Activated B cell treated with CpG ODN at 0.5 μM for 24 hours (primary cell): ENCODE measurements at regions of chr9 and their contacts with region 1.

Region 1: DNA sequence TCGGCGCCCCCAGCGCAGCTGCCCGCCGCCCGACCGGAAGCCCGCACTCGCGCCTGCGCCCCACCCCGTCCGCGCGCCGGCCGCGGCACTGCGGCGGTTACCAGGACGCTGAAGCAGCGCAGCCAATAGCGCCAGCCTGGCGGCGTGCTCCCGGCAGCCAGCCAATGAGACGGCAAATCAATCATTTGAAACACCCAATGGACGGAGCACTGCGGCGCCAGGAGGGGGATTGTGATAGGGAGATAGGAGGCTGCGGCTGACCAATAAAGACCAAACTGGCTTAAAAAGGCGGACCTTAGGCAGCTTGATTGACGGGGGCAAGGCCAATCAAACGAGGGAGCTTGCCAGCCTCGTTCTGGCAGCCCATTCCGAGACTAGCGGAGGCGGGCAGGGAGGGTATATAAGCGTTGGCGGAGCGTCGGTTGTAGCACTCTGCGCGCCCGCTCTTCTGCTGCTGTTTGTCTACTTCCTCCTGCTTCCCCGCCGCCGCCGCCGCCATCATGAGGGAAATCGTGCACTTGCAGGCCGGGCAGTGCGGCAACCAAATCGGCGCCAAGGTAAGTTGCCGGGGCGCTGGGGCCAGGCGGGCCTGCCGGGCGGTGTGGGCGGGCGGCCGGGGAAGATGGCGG is at the start of gene TUBB4B:
- DNase-seq: peak; percentile 95
- ATAC-seq: peak; percentile 75
- H3K4me3 Mint-ChIP-seq: peak within 1 kb of the TSS; percentile 88
- H3K27ac Mint-ChIP-seq: peak within 1 kb of the TSS; percentile 93
- H3K4me1 Mint-ChIP-seq: peaks cover 50% of the 10 kb centered on the region
- H3K27me3 Mint-ChIP-seq: no peaks in the 10 kb centered on the region
- CTCF ChIP-seq: no peak
- total RNA-seq, gene TUBB4B: 182 and 197 TPM in 2 replicates

Region 2: GRCh38 chr9:136564379-136564988 is 676.5 kb before region 1 on chr9:
- CTCF ChIA-PET with region 1: no interaction called
- POLR2A ChIA-PET with region 1: no interaction called
- intact Hi-C with region 1: no loop called
- DNase-seq: no peak
- ATAC-seq: no peak
- H3K4me3 Mint-ChIP-seq: no peak overlapping the region
- H3K27ac Mint-ChIP-seq: no peak overlapping the region
- H3K4me1 Mint-ChIP-seq: no peaks in the 10 kb centered on the region
- H3K27me3 Mint-ChIP-seq: no peaks in the 10 kb centered on the region
- CTCF ChIP-seq: no peak

Region 3: GRCh38 chr9:137086531-137087408 is 154.2 kb before region 1 on chr9 and contains the start of gene MAN1B1:
- CTCF ChIA-PET with region 1: interaction called, 7 read pairs
- POLR2A ChIA-PET with region 1: interaction called, 37 read pairs
- intact Hi-C with region 1: no loop called
- DNase-seq: peak; percentile 98
- ATAC-seq: peak; percentile 77
- H3K4me3 Mint-ChIP-seq: peak within 1 kb of the TSS; percentile 93
- H3K27ac Mint-ChIP-seq: peak within 1 kb of the TSS; percentile 97
- H3K4me1 Mint-ChIP-seq: peaks cover 49% of the 10 kb centered on the region
- H3K27me3 Mint-ChIP-seq: no peaks in the 10 kb centered on the region
- CTCF ChIP-seq: no peak
- total RNA-seq, gene MAN1B1: 33.6 and 37.7 TPM in 2 replicates

Region 4: DNA sequence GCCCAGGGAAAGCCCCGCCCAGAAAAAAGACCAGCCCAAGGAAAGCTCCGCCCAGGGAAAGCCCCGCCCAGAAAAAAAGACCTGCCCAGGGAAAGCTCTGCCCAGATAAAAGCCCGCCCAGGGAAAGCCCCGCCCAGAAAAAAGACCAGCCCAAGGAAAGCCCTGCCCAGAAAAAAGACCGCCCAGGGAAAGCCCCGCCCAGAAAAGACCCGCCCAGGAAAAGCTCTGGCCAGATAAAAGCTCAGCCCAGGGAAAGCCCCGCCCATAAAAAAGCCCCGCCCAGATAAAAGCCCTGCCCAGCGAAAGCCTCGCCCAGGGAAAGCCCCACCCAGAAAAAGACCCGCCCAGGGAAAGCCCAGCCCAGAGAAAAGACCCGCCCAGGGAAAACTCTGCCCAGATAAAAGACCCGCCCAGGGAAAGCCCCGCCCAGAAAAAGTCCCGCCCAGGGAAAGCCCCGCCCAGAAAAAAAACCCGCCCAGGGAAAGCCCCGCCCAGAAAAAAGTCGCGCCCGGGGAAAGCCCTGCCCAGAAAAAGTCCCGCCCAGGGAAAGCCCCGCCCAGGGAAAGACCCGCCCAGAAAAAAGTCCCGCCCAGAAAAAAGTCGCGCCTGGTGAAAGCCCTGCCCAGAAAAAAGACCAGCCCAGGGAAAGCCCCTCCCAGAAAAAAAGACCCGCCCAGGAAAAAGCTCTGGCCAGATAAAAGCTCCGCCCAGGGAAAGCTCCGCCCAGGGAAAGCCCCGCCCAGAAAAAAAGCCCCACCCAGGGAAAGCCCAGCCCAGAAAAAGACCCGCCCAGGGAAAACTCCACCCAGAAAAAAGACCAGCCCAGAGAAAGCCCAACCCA is 90.1 kb before region 1 on chr9:
- CTCF ChIA-PET with region 1: interaction called, 4 read pairs
- POLR2A ChIA-PET with region 1: interaction called, 12 read pairs
- intact Hi-C with region 1: no loop called
- DNase-seq: peak; percentile 67
- ATAC-seq: peak; percentile 67
- H3K4me3 Mint-ChIP-seq: peak overlapping the region; percentile 52
- H3K27ac Mint-ChIP-seq: peak overlapping the region; percentile 92
- H3K4me1 Mint-ChIP-seq: peaks cover 14% of the 10 kb centered on the region
- H3K27me3 Mint-ChIP-seq: peaks cover 9% of the 10 kb centered on the region
- CTCF ChIP-seq: no peak

Region 5: DNA sequence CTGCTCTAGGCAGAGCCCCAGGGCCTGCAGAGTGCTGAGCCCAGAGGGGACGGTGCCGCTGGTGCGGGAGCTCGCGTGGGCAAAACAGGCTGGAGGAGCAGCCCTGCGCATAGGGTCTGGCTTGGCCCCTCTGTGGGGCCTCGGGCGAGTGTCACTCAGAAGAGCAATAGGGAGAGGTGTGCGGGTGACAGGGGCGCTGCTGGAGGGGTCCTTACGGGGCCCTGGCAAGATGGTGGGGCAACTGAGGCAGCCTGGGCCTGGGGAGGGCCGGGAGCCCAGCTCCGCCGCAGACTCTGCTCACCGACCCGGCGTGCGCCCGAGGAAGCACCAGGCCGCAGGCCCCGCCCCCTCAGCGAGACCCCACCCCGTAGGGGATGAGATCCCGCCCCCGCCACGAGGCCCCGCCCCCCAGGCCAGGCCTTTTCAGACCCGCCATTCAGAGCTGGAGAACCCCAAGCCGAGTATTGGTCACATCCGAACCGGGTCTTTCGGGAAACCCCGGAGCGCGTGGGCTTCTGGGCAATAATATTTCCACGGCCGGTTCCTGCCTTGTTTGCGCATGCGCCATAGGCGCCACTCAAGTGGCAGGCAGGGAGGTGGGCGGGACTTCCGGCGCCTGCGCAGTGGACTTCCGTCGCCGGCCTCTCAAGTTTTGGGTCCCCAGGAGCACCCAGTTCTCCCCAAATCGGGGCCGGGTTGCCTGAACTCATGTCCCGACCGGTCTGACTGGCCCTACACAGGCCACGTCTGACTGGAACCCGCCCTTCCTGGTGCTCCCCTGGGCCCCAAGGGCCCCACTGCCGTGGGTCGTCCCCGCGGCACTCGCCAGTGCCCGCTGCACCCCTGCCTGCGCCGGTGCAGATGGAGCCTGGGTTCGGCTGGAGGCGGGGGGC is 17.7 kb before region 1 on chr9:
- CTCF ChIA-PET with region 1: interaction called, 10 read pairs
- POLR2A ChIA-PET with region 1: interaction called, 42 read pairs
- intact Hi-C with region 1: loop called (anchors 1 kb)
- DNase-seq: peak; percentile 97
- ATAC-seq: peak; percentile 93
- H3K4me3 Mint-ChIP-seq: peak overlapping the region; percentile 83
- H3K27ac Mint-ChIP-seq: peak overlapping the region; percentile 73
- H3K4me1 Mint-ChIP-seq: peaks cover 20% of the 10 kb centered on the region
- H3K27me3 Mint-ChIP-seq: peaks cover 2% of the 10 kb centered on the region
- CTCF ChIP-seq: no peak

Region 6: DNA sequence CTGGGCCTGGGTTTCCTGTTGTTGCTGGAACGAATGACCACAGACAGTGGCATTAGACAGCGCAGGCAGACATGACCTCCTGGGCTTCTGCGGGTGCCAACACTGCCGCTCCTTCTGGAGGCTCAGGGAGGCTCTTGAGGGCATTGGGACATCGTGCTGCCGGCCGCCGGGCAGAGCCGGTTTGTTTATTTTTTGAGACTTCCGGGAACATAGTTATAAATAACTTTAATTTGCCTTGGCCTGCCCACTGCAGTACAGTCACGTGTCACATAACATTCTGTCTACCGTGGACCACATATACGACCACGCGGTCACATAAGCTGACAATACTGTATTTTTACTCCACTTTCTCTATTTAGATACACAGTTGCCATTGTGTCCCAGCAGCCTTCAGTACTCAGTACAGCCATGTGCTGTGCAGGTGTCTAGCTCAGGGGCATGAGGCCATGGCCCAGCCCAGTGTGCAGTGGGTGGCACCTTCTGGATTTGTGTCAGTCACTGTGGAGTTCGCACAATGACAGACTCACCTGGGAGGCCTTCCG is 28.3 kb after region 1 on chr9:
- CTCF ChIA-PET with region 1: interaction called, 3 read pairs
- POLR2A ChIA-PET with region 1: interaction called, 16 read pairs
- intact Hi-C with region 1: loop called (anchors 2 kb)
- DNase-seq: no peak
- ATAC-seq: peak; percentile 9
- H3K4me3 Mint-ChIP-seq: peak overlapping the region; percentile 33
- H3K27ac Mint-ChIP-seq: peak overlapping the region; percentile 44
- H3K4me1 Mint-ChIP-seq: peaks cover 39% of the 10 kb centered on the region
- H3K27me3 Mint-ChIP-seq: no peaks in the 10 kb centered on the region
- CTCF ChIP-seq: no peak

Region 7: GRCh38 chr9:137302176-137302994 is 61.4 kb after region 1 on chr9 and contains the start of gene NRARP:
- CTCF ChIA-PET with region 1: interaction called, 5 read pairs
- POLR2A ChIA-PET with region 1: interaction called, 10 read pairs
- intact Hi-C with region 1: no loop called
- DNase-seq: peak; percentile 95
- ATAC-seq: peak; percentile 85
- H3K4me3 Mint-ChIP-seq: peak within 1 kb of the TSS; percentile 74
- H3K27ac Mint-ChIP-seq: no peak within 1 kb of the TSS
- H3K4me1 Mint-ChIP-seq: peaks cover 16% of the 10 kb centered on the region
- H3K27me3 Mint-ChIP-seq: peaks cover 10% of the 10 kb centered on the region
- CTCF ChIP-seq: no peak
- total RNA-seq, gene NRARP: 1.9 and 3.0 TPM in 2 replicates

Region 8: DNA sequence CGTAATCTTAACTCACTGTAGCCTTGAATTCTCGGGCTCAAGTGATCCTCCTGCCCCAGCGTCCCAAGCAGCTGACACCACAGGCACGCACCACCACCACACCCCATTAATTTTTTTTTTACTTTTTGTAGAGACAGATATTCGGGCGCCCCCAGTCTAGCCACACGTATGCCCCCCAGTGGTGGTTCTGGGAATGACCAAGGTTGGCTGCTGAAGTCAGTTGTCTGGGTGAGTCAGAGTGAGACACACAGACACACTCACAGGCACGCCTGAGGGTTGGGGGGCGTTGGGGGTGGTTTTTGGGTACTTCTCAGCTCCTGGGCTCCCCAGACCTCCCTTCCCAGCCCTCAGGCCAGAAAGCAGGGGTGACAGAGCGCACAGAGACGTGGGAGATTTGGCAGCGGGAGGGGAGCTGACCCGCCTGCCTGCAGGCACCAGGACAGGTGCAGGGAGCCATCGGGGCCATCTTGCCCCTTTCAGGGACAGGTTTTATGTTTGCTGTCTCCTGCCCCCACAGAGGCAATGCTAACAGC is 204.4 kb after region 1 on chr9:
- CTCF ChIA-PET with region 1: interaction called, 3 read pairs
- POLR2A ChIA-PET with region 1: no interaction called
- intact Hi-C with region 1: loop called (anchors 1 kb)
- DNase-seq: peak; percentile 73
- ATAC-seq: peak; percentile 94
- H3K4me3 Mint-ChIP-seq: peak overlapping the region; percentile 24
- H3K27ac Mint-ChIP-seq: no peak overlapping the region
- H3K4me1 Mint-ChIP-seq: peaks cover 8% of the 10 kb centered on the region
- H3K27me3 Mint-ChIP-seq: peaks cover 9% of the 10 kb centered on the region
- CTCF ChIP-seq: peak; percentile 89